ENCODE measurements at regions of chr9 and their contacts with region 1.

Region 1: GRCh38 chr9:136686794-136687711 is at the start of gene AGPAT2:
- DNase-seq: peak; percentile 74 to 80 (median 78)
- H3K4me3 ChIP-seq: peak within 1 kb of the TSS; percentile 78 to 97 (median 97)
- H3K4me3 Mint-ChIP-seq: peak within 1 kb of the TSS; percentile 93 to 98
- H3K27ac ChIP-seq: peak within 1 kb of the TSS; percentile 89 to 92
- H3K27ac Mint-ChIP-seq: peak within 1 kb of the TSS; percentile 88 to 96 (median 93)
- H3K4me1 ChIP-seq: peaks cover 24 to 39% of the 10 kb centered on the region in 2 donors
- H3K4me1 Mint-ChIP-seq: peaks cover 28% of the 10 kb centered on the region
- H3K27me3 ChIP-seq: no peaks in the 10 kb centered on the region
- H3K27me3 Mint-ChIP-seq: peaks cover 0 to 3% (median 0%) of the 10 kb centered on the region in 3 donors
- CTCF ChIP-seq: no peak
- polyA plus RNA-seq, gene AGPAT2: 80.1 to 139 (median 116) TPM

Region 2: GRCh38 chr9:136728080-136728547 is 41.1 kb after region 1 on chr9:
- intact Hi-C with region 1: loop called (anchors 5 kb)
- DNase-seq: peak; percentile 86 to 93 (median 93)
- H3K4me3 ChIP-seq: peak overlapping the region; percentile 80 to 89 (median 85)
- H3K4me3 Mint-ChIP-seq: peak overlapping the region; percentile 96 to 97
- H3K27ac ChIP-seq: peak overlapping the region in 1 of 2 donors; percentile 87
- H3K27ac Mint-ChIP-seq: peak overlapping the region in 1 of 7 donors; percentile 85
- H3K4me1 ChIP-seq: peaks cover 26 to 38% of the 10 kb centered on the region in 2 donors
- H3K4me1 Mint-ChIP-seq: peaks cover 33% of the 10 kb centered on the region
- H3K27me3 ChIP-seq: peaks cover 0 to 9% of the 10 kb centered on the region in 2 donors
- H3K27me3 Mint-ChIP-seq: peaks cover 6 to 12% (median 10%) of the 10 kb centered on the region in 3 donors
- CTCF ChIP-seq: peak; percentile 91

Region 3: GRCh38 chr9:136757328-136757727 is 70.3 kb after region 1 on chr9:
- intact Hi-C with region 1: no loop called
- DNase-seq: no peak
- H3K4me3 ChIP-seq: no peak overlapping the region
- H3K4me3 Mint-ChIP-seq: no peak overlapping the region
- H3K27ac ChIP-seq: no peak overlapping the region
- H3K27ac Mint-ChIP-seq: peak overlapping the region in 1 of 7 donors; percentile 38
- H3K4me1 ChIP-seq: no peaks in the 10 kb centered on the region
- H3K4me1 Mint-ChIP-seq: peaks cover 5% of the 10 kb centered on the region
- H3K27me3 ChIP-seq: no peaks in the 10 kb centered on the region
- H3K27me3 Mint-ChIP-seq: peaks cover 0 to 9% (median 4%) of the 10 kb centered on the region in 3 donors
- CTCF ChIP-seq: no peak